Naive thymus-derived CD4-positive, alpha-beta T cell (primary cell): ENCODE measurements at regions of chr2 and their contacts with region 1.

Region 1: DNA sequence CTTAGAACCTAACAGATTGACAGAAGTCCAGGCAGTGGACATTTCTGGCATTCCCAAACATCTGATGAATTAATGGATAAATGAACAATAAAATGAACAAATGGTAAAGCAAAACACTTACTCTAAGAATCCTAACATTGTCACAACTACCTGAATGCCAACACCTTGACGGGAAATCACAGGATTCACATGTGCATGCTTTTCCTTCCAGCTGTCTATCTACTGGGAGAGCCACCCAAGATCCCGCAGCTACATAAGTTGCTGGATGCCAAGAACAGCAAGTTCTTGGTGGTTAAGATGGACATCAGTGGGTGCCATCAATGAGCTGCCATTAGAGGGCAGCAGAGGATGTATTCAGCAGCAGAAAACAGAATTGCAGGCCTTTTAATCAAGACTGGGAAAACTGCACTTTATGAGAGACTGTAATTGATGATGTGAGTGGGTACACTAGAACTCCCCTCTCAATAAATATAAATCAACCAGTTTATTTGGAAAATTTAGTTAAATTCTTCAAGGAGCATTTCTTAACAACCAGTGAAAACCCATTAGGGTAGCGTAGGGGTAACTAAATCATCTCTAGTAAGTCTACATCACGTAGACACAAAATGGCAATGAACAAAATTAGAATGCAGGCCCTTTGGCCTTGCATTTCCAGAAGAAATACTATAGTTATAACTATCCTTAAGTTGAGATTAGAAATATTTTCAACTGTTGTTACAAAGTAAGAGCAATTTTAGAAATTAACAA is 45.6 kb downstream of the SESTD1 start:
- DNase-seq: peak in 8 of 9 donors; percentile 12 to 53 (median 34)
- ATAC-seq: peak; percentile 72
- H3K4me3 ChIP-seq: no peak overlapping the region
- H3K4me3 Mint-ChIP-seq: no peak overlapping the region
- H3K27ac ChIP-seq: no peak overlapping the region
- H3K27ac Mint-ChIP-seq: no peak overlapping the region
- H3K4me1 ChIP-seq: no peaks in the 10 kb centered on the region
- H3K4me1 Mint-ChIP-seq: no peaks in the 10 kb centered on the region
- H3K27me3 ChIP-seq: no peaks in the 10 kb centered on the region
- H3K27me3 Mint-ChIP-seq: peaks cover 0 to 7% (median 0%) of the 10 kb centered on the region in 5 donors

Region 2: DNA sequence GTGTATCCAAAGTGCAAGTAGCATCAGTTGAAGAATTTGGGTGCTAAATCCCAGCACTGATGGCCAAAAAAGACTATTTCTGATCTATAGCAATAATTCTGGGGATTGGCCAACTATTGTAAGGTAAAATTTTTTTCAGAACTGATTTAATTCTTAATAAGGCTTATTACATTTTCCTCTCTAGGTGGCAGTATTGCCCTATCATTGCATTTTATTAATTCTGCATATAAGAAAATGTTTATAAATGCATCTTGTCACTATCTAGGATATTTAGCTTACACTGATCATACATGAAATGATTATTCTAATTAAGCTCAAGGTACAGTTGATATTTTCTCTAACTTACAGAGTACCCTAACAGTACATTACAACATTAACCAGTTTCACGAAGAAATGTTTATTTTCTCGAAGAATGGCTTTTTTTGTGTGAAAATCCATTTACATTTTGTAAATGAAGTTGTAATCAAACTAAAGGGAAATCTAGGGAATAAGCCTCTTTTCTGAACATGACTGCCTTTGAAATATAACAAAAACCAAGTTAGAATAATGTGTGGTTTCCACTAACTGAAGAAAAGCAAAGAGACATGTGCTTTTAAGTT is 422.8 kb before region 1 on chr2:
- CTCF ChIA-PET with region 1: no interaction called
- POLR2A ChIA-PET with region 1: no interaction called
- intact Hi-C with region 1: loop called in 1 of 2 experiments (anchors 2 kb)
- DNase-seq: peak in 5 of 9 donors; percentile 27 to 33 (median 28)
- ATAC-seq: no peak
- H3K4me3 ChIP-seq: no peak overlapping the region
- H3K4me3 Mint-ChIP-seq: no peak overlapping the region
- H3K27ac ChIP-seq: no peak overlapping the region
- H3K27ac Mint-ChIP-seq: no peak overlapping the region
- H3K4me1 ChIP-seq: no peaks in the 10 kb centered on the region
- H3K4me1 Mint-ChIP-seq: no peaks in the 10 kb centered on the region
- H3K27me3 ChIP-seq: no peaks in the 10 kb centered on the region
- H3K27me3 Mint-ChIP-seq: no peaks in the 10 kb centered on the region

Region 3: DNA sequence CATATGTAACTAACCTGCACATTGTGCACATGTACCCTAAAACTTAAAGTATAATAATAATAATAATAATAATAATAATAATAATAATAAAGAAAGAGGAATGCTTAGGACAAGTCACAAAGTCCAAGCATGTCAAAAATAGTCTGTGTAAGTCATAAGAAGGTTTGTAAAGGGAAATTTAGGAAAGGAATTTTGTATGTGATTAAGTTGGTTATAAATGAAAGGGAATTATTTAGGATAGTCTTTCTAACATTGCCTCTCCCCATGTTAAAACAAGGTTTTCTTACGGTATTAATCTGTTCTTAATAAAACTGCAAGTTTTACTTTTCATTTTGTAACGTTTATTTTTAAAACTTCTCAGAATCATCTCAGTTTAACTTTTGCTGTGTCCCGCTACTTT is 17.2 kb before region 1 on chr2:
- CTCF ChIA-PET with region 1: no interaction called
- POLR2A ChIA-PET with region 1: no interaction called
- intact Hi-C with region 1: loop called in 1 of 2 experiments (anchors 2 kb)
- DNase-seq: no peak
- ATAC-seq: no peak
- H3K4me3 ChIP-seq: no peak overlapping the region
- H3K4me3 Mint-ChIP-seq: no peak overlapping the region
- H3K27ac ChIP-seq: no peak overlapping the region
- H3K27ac Mint-ChIP-seq: no peak overlapping the region
- H3K4me1 ChIP-seq: no peaks in the 10 kb centered on the region
- H3K4me1 Mint-ChIP-seq: peaks cover 0 to 1% (median 0%) of the 10 kb centered on the region in 7 donors
- H3K27me3 ChIP-seq: no peaks in the 10 kb centered on the region
- H3K27me3 Mint-ChIP-seq: no peaks in the 10 kb centered on the region

Region 4: DNA sequence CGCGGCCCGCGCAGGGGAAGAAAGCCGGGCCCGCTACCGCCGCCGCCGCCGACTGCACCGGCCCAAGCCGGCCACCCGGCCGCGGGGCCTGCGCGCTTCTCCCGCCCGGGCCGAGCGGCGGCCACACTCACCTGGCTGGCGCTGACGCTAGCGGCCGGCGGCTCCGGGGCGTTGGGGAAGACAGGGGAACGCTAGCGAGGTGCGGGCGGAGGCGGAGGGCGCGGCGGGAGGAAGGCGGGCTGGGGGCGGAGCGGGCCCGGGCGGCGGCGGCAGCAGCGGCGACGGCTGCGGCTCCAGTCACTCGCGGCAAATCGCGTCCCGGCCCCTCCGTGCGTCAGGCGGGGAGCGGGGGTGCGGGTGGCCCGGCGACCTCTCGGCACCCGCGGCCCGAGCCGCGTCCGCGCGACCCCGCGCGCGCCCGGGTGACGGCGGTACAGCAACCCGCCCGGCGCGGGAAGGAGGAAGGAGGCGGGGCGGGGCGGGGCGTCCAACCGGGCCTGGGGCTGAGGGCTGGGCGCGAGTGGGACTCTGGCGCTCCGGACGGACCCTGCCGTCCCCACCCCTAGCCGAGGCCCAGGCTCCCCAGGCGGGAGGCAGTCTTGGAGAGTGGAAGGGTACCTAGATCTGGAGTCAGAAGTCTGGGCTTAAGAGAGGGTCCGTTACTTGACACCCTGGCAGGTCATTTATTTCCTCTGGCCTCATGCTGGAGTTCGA is 45.5 kb after region 1 on chr2 and contains the start of gene SESTD1:
- CTCF ChIA-PET with region 1: no interaction called
- POLR2A ChIA-PET with region 1: no interaction called
- intact Hi-C with region 1: loop called (anchors 1 to 2 kb)
- DNase-seq: peak; percentile 11 to 75 (median 47)
- ATAC-seq: peak; percentile 81
- H3K4me3 ChIP-seq: peak within 1 kb of the TSS; percentile 49
- H3K4me3 Mint-ChIP-seq: peak within 1 kb of the TSS; percentile 77 to 92 (median 86)
- H3K27ac ChIP-seq: peak within 1 kb of the TSS; percentile 60
- H3K27ac Mint-ChIP-seq: peak within 1 kb of the TSS in 7 of 9 donors; percentile 10 to 78 (median 45)
- H3K4me1 ChIP-seq: peaks cover 0 to 5% of the 10 kb centered on the region in 2 donors
- H3K4me1 Mint-ChIP-seq: peaks cover 13 to 24% (median 19%) of the 10 kb centered on the region in 7 donors
- H3K27me3 ChIP-seq: no peaks in the 10 kb centered on the region
- H3K27me3 Mint-ChIP-seq: peaks cover 34 to 48% (median 38%) of the 10 kb centered on the region in 5 donors
- total RNA-seq, gene SESTD1: 6.1 to 23.2 (median 8.1) TPM

Region 5: GRCh38 chr2:179354739-179355537 is 135.9 kb after region 1 on chr2:
- CTCF ChIA-PET with region 1: no interaction called
- POLR2A ChIA-PET with region 1: no interaction called
- intact Hi-C with region 1: no loop called
- DNase-seq: no peak
- ATAC-seq: no peak
- H3K4me3 ChIP-seq: no peak overlapping the region
- H3K4me3 Mint-ChIP-seq: no peak overlapping the region
- H3K27ac ChIP-seq: no peak overlapping the region
- H3K27ac Mint-ChIP-seq: no peak overlapping the region
- H3K4me1 ChIP-seq: no peaks in the 10 kb centered on the region
- H3K4me1 Mint-ChIP-seq: peaks cover 0 to 2% (median 0%) of the 10 kb centered on the region in 7 donors
- H3K27me3 ChIP-seq: no peaks in the 10 kb centered on the region
- H3K27me3 Mint-ChIP-seq: peaks cover 0 to 21% (median 9%) of the 10 kb centered on the region in 5 donors

Region 6: DNA sequence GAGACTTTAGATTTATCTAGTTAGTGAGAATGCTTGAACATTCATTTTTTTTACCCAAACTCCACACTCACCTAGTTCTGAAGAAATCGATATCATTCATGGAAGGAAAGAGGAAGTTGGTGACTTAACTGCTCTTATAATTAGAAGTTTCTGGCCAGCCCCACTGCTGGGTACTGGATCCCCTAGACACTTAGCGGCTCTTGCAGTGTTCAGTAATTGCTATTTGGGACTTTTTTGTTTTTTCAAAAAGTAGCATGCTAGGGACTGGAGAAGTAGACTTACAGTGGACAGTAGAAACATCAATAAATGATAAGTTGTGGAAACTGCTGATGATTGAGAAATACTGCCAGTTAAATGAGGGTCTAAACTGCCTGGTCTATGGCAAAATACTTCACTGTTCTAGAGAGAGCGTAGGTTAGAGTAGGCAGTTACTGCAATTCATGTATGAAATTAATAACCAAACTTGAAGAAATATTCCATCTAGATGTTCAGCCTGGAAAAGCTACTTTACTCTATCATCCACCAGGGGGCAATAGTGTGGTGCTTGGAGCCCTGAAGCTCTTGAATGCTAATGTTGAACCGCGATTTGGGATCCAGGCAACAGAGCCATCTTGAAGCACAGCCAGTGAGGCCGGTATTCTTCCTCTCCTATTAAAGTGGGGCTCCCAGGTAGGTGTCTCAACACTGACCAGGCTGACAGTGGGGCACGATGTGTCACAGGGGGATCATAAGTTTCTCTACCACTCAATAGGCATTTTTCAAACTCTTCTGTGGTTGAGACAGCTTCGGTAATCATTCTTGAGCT is 191.7 kb after region 1 on chr2:
- CTCF ChIA-PET with region 1: interaction called, 3 read pairs
- POLR2A ChIA-PET with region 1: no interaction called
- intact Hi-C with region 1: loop called in 1 of 2 experiments (anchors 1 kb)
- DNase-seq: peak in 1 of 9 donors; percentile 11
- ATAC-seq: no peak
- H3K4me3 ChIP-seq: no peak overlapping the region
- H3K4me3 Mint-ChIP-seq: no peak overlapping the region
- H3K27ac ChIP-seq: no peak overlapping the region
- H3K27ac Mint-ChIP-seq: peak overlapping the region in 1 of 9 donors; percentile 9
- H3K4me1 ChIP-seq: no peaks in the 10 kb centered on the region
- H3K4me1 Mint-ChIP-seq: peaks cover 0 to 9% (median 0%) of the 10 kb centered on the region in 7 donors
- H3K27me3 ChIP-seq: no peaks in the 10 kb centered on the region
- H3K27me3 Mint-ChIP-seq: peaks cover 15 to 57% (median 41%) of the 10 kb centered on the region in 5 donors

Region 7: DNA sequence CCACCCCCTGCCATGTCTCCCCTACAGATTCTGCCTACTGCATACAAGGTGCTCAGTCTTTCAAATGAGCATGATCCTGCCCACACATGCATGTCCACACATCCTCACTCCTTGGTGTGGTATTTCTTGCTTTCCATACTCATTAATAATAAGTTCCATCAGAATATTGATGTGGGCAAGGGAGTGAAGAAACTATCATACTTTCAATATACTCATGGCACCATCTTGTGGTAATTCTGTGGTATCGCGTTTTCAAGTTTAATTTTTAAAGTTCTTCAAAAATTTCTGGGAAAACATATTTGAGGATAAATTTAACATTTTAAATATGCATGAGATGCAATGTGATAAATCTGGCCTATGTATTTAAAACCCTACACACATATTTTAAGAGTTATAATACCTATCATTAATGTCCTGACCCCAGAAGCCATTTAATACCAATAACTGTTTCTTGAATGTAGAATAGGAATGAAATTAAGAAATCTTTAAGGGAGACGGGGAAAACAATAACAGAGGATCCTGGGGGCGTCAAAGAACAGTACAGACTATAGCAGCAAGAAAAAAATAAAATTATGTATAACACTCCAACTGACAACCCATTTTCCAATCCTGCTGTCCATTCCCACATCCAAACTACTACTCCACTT is 532.3 kb after region 1 on chr2:
- CTCF ChIA-PET with region 1: no interaction called
- POLR2A ChIA-PET with region 1: no interaction called
- intact Hi-C with region 1: loop called in 1 of 2 experiments (anchors 2 kb)
- DNase-seq: no peak
- ATAC-seq: no peak
- H3K4me3 ChIP-seq: no peak overlapping the region
- H3K4me3 Mint-ChIP-seq: no peak overlapping the region
- H3K27ac ChIP-seq: no peak overlapping the region
- H3K27ac Mint-ChIP-seq: no peak overlapping the region
- H3K4me1 ChIP-seq: no peaks in the 10 kb centered on the region
- H3K4me1 Mint-ChIP-seq: no peaks in the 10 kb centered on the region
- H3K27me3 ChIP-seq: no peaks in the 10 kb centered on the region
- H3K27me3 Mint-ChIP-seq: peaks cover 0 to 5% (median 0%) of the 10 kb centered on the region in 5 donors

Region 8: GRCh38 chr2:180077295-180077906 is 858.4 kb after region 1 on chr2:
- CTCF ChIA-PET with region 1: no interaction called
- POLR2A ChIA-PET with region 1: no interaction called
- intact Hi-C with region 1: loop called in 1 of 2 experiments (anchors 2 kb)
- DNase-seq: no peak
- ATAC-seq: no peak
- H3K4me3 ChIP-seq: no peak overlapping the region
- H3K4me3 Mint-ChIP-seq: no peak overlapping the region
- H3K27ac ChIP-seq: no peak overlapping the region
- H3K27ac Mint-ChIP-seq: no peak overlapping the region
- H3K4me1 ChIP-seq: no peaks in the 10 kb centered on the region
- H3K4me1 Mint-ChIP-seq: no peaks in the 10 kb centered on the region
- H3K27me3 ChIP-seq: no peaks in the 10 kb centered on the region
- H3K27me3 Mint-ChIP-seq: peaks cover 0 to 18% (median 10%) of the 10 kb centered on the region in 5 donors